RWPE1 (cell line): ENCODE measurements at regions of chr1 and their contacts with region 1.

Region 1: GRCh38 chr1:44652445-44653106 is 21.7 kb downstream of the TMEM53 start:
- DNase-seq: peak; percentile 73
- H3K27ac ChIP-seq: peak overlapping the region; percentile 58
- CTCF ChIP-seq: peak; percentile 95

Region 2: GRCh38 chr1:44002606-44003157 is 649.9 kb before region 1 on chr1:
- CTCF ChIA-PET with region 1: interaction called, 10 read pairs
- POLR2A ChIA-PET with region 1: no interaction called
- DNase-seq: no peak
- H3K27ac ChIP-seq: no peak overlapping the region
- CTCF ChIP-seq: no peak

Region 3: DNA sequence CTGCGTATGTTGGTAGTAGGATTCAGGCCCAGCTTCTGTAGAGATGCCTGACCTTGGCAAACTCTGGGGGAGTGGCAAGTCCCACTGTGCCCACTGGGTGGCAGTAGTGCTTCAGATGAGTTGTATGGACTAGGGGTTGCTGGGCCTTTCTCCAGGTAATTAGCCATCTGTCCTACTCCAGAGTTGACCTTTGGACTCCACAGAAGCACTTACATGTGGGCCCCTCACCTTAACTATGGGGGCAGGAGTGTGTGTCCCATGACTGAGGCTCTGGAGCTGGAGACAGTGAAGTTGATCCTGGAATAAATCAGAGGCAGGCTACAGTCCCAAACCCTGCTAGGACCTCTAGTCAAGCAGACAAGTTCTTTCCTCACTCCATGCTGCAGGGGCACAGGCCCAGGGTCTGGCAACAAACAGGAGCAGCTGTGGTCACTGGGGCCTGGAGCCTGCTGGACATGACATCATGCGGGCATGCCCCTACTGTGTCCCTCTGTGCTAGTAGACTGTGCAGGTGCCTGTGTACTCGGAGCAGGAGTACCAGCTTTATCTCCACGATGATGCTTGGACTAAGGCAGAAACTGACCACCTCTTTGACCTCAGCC is 434.7 kb before region 1 on chr1:
- CTCF ChIA-PET with region 1: interaction called, 14 read pairs
- POLR2A ChIA-PET with region 1: no interaction called
- DNase-seq: peak; percentile 65
- H3K27ac ChIP-seq: peak overlapping the region; percentile 48
- CTCF ChIP-seq: peak; percentile 89

Region 4: DNA sequence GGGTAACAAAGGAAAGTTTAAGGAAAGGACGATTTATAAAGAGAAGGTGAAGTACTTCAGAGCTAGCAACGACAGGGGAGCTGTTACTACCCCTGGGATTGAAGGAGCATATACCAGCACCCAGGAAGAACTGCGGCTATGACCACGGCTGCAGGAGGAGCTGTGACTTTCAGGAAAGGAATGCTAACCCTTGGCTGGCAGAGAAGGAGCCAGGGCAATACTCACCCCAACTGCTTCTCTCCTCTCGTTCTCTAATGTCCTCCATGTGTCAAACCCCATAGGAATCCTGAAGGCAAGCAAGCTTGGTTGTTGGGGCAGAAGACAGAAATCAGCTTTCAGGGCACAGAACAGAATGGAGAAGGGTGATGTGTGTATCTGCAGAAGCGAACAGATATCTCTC is 98.8 kb before region 1 on chr1:
- CTCF ChIA-PET with region 1: no interaction called
- POLR2A ChIA-PET with region 1: no interaction called
- DNase-seq: peak; percentile 85
- H3K27ac ChIP-seq: peak overlapping the region; percentile 61; the same call in 1 of the 2 replicates
- CTCF ChIP-seq: no peak

Region 5: DNA sequence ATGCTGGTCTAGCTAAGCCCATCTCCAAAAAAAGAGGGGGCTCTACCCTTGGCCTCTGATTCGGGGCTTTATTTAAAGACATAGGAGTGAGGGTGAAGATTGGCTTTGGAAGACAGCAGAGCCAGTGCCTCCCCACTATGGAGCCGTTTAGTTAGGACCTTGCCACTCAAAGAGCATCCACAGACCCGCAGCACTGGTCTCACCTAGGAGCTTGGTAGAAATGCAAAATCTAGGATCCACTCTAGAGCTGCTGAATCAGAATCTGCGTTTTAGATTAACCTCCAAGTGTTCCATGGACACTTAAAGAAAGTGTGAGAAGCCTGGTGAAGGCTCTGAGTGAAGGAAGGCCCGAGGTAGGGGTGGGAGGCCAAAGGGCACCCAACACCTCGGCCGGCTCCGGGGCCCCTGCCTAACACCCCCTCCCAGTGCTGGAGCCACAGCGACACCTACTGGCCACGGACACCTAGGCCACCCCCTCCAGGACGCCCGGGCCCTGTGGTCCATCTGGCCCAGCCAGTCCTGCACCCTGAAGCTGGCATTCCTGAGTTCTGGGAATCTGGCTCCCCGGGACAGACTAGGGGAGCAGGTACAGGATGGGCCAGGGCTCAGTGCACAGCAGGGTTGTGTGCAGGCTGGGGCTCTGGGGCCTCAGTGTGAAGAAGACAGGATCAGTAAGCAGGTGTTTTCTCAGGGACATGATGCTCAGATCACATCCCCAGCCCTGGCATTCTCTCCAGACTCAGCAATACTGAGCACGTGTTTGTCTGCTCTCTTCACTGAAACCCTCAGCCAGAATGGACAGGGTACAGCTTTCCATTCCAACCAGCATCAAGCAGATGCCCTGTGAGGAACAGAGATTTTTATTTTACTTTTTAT is 57.5 kb before region 1 on chr1:
- CTCF ChIA-PET with region 1: interaction called, 15 read pairs
- POLR2A ChIA-PET with region 1: no interaction called
- DNase-seq: peak; percentile 90
- H3K27ac ChIP-seq: no peak overlapping the region
- CTCF ChIP-seq: peak; percentile 89

Region 6: DNA sequence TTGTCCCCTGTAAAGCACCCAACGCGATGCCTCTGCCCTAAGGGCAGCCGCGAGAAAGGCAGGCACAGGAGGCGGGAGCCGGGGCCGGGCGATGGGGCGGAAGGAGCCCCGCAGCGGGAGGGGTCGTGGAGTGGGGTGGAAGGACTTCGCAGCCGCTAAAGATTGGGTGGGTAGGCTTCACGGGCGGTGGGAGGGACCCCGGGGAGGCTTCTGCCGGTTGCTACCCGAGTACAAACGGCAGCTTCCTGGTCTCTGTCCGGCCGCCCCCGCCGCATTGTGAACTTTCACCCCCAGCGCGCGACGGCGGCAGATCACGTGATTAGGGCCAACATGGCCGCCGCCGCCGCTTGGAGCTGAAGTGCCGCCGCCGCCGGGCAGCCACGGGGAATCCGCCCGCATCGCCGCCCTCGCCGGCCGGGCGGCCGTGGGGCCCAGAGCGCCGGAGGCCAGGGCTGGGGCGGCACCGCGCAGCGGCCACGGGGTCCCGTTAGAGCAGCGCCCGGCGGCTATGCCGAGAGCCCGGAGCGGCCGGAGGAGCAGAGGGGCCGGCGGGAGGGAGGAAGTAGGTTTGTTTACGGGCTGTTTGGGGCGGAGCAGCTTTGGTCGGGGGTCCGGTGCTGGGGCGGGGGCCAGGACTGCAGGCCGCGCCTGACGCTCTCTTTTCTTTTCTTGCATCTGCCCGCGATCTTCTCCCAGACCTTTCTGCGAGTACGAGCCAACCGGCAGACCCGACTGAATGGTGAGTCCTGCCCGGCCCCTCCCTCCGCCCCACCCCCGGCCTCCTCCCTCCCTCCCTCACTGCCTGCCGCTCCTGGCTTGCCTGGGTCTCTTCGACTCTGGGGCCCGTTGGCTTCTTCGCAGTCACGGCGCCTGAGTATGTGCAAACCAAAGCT is 20.7 kb before region 1 on chr1:
- CTCF ChIA-PET with region 1: interaction called, 13 read pairs
- POLR2A ChIA-PET with region 1: interaction called, 3 read pairs
- DNase-seq: peak; percentile 92
- H3K27ac ChIP-seq: peak overlapping the region; percentile 97
- CTCF ChIP-seq: no peak

Region 7: GRCh38 chr1:44881011-44881632 is 228.5 kb after region 1 on chr1:
- CTCF ChIA-PET with region 1: no interaction called
- POLR2A ChIA-PET with region 1: no interaction called
- DNase-seq: peak; percentile 48
- H3K27ac ChIP-seq: peak overlapping the region; percentile 55
- CTCF ChIP-seq: no peak